ENCODE measurements at regions of chr13 and their contacts with region 1.

Region 1: DNA sequence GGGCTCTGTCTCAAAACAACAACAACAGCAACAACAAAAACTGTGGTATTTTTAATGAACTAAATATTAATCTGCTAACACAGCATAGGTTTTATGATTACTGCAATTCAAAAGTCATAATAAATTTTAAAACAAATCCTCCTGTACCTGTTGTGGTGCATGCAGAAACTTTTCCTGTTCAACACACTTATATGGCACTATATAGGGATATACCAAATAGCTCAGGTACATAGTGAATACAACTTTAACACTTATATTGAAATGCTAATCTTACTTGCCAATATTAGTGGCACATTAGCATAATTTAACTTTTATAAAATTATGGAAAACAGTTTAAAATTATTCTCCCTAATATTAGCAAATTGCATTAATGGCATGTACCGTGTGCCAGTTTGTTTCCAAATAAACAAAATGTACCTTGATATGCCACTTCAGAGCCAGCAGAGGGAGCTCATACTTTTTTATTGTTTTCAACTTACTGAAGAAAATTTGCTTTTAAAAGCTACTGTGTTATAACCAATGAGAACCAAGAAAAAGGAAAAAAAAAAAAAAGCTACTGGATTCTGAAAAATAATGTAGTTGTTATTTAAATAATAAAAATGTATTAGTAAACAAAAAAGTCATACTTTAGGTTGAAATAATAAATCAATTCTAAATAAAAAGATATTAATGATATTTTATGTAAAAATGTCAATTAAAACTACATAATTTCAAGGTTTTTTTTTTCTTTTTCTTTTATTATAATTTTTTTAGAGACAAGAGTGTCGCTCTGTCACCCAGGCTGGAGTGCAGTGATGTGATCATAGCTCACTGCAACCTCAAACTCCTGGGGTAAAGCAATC is 18.0 kb upstream of the RBM26 start:
- DNase-seq: peak in 1 of 2 experiments; percentile 55
- H3K4me3 ChIP-seq: no peak overlapping the region
- H3K27ac ChIP-seq: no peak overlapping the region
- H3K4me1 ChIP-seq: no peaks in the 10 kb centered on the region
- H3K27me3 ChIP-seq: no peaks in the 10 kb centered on the region
- CTCF ChIP-seq: peak; percentile 87

Region 2: GRCh38 chr13:79295906-79296706 is 127.9 kb before region 1 on chr13:
- CTCF ChIA-PET with region 1: no interaction called
- POLR2A ChIA-PET with region 1: no interaction called
- intact Hi-C with region 1: no loop called
- DNase-seq: no peak
- H3K4me3 ChIP-seq: no peak overlapping the region
- H3K27ac ChIP-seq: no peak overlapping the region
- H3K4me1 ChIP-seq: no peaks in the 10 kb centered on the region
- H3K27me3 ChIP-seq: no peaks in the 10 kb centered on the region
- CTCF ChIP-seq: no peak

Region 3: DNA sequence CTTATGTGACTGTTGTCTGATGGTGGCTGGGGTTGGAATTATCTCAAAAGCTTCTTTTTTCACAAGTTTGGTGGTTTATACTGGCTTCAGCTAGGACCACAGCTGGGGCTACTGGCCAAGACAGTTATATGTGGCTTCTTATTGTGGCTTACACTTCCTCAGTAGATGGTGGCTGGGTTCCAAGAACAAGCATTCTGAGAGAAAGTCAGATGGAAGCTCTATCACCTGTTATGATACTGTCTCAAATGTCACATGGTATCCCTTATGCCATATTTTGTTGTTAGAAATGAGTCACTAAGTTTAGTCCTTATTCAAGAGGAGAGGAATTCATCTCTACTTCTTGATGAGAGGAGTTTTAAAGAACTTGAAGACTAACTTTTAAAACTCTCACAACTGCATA is 98.6 kb after region 1 on chr13:
- CTCF ChIA-PET with region 1: no interaction called
- POLR2A ChIA-PET with region 1: no interaction called
- intact Hi-C with region 1: loop called (anchors 5 kb)
- DNase-seq: no peak
- H3K4me3 ChIP-seq: no peak overlapping the region
- H3K27ac ChIP-seq: no peak overlapping the region
- H3K4me1 ChIP-seq: peaks cover 9% of the 10 kb centered on the region; the same call in 1 of the 2 replicates
- H3K27me3 ChIP-seq: no peaks in the 10 kb centered on the region
- CTCF ChIP-seq: no peak

Region 4: GRCh38 chr13:79541426-79542049 is 117.5 kb after region 1 on chr13:
- CTCF ChIA-PET with region 1: interaction called, 26 read pairs
- POLR2A ChIA-PET with region 1: interaction called, 11 read pairs
- intact Hi-C with region 1: loop called (anchors 1 kb)
- DNase-seq: peak in 1 of 2 experiments; percentile 46
- H3K4me3 ChIP-seq: no peak overlapping the region
- H3K27ac ChIP-seq: no peak overlapping the region
- H3K4me1 ChIP-seq: no peaks in the 10 kb centered on the region
- H3K27me3 ChIP-seq: no peaks in the 10 kb centered on the region
- CTCF ChIP-seq: peak; percentile 94

Region 5: DNA sequence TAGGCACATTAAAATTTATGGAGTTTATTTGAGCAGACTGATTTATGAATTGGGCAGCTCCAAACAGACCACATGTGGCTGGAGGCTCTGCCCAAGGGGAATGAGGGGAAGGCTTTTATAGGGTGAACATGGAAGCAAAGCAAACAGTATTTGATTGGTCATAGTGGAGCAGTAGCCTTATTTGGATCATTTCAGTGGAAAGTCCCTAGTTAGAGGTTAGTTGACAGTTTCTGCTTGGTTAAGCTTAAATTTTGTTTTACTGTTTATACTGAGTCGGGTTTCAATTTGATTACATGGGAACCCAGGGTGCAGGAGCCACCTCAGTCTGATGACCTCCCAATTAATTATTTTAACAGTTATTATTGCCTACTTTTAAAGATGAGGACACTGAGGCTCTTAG is 197.4 kb after region 1 on chr13:
- CTCF ChIA-PET with region 1: no interaction called
- POLR2A ChIA-PET with region 1: no interaction called
- intact Hi-C with region 1: loop called (anchors 10 kb)
- DNase-seq: peak; percentile 0 to 62
- H3K4me3 ChIP-seq: no peak overlapping the region
- H3K27ac ChIP-seq: peak overlapping the region; percentile 96
- H3K4me1 ChIP-seq: peaks cover 26% of the 10 kb centered on the region
- H3K27me3 ChIP-seq: no peaks in the 10 kb centered on the region
- CTCF ChIP-seq: no peak

Region 6: DNA sequence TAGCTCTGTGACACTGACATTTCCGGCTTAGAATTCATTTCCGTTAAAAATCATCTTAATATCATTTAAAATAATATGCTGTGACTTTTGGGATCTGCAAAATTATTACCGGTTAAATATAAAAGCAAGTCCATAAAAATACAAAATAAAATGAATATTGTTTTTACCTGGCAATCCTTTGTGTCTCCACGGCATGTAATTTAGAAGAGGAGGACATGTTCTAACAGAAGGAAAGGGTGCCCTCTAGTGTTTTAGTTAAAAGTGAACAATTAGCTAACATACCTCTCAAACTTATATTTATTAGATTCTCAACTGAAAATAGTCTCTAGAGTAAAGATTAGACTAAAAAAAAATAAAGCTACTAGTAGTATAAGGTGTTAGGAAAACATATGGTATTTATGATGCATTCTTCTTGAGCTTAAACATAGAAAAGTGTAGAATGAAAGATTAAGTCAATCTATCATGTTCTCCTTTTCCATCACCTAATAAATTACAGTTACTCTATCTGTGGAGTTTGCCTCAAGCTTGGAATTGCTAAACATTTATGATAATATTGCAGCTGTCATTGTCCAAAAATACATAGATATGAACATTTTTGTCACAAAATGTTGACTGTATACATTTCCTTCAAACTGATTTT is 1593.6 kb after region 1 on chr13:
- CTCF ChIA-PET with region 1: no interaction called
- POLR2A ChIA-PET with region 1: no interaction called
- intact Hi-C with region 1: loop called (anchors 5 kb)
- DNase-seq: no peak
- H3K4me3 ChIP-seq: no peak overlapping the region
- H3K27ac ChIP-seq: no peak overlapping the region
- H3K4me1 ChIP-seq: no peaks in the 10 kb centered on the region
- H3K27me3 ChIP-seq: no peaks in the 10 kb centered on the region
- CTCF ChIP-seq: peak; percentile 70

Measured in PC-9 (cell line).